ENCODE measurements at regions of chr21 and their contacts with region 1.

Region 1: GRCh38 chr21:28745131-28746016 is 247.3 kb downstream of the LTN1 start:
- DNase-seq: peak; percentile 61 to 70 (median 65)
- H3K4me3 ChIP-seq: peak overlapping the region; percentile 31 to 51
- H3K4me3 Mint-ChIP-seq: no peak overlapping the region
- H3K27ac ChIP-seq: no peak overlapping the region
- H3K27ac Mint-ChIP-seq: no peak overlapping the region
- H3K4me1 ChIP-seq: peaks cover 5% of the 10 kb centered on the region
- H3K4me1 Mint-ChIP-seq: no peaks in the 10 kb centered on the region
- H3K27me3 ChIP-seq: no peaks in the 10 kb centered on the region
- H3K27me3 Mint-ChIP-seq: no peaks in the 10 kb centered on the region

Region 2: GRCh38 chr21:26850108-26850643 is 1895.2 kb before region 1 on chr21:
- CTCF ChIA-PET with region 1: interaction called, 15 read pairs
- POLR2A ChIA-PET with region 1: no interaction called
- intact Hi-C with region 1: loop called (anchors 1 kb)
- DNase-seq: no peak
- H3K4me3 ChIP-seq: no peak overlapping the region
- H3K4me3 Mint-ChIP-seq: no peak overlapping the region
- H3K27ac ChIP-seq: no peak overlapping the region
- H3K27ac Mint-ChIP-seq: no peak overlapping the region
- H3K4me1 ChIP-seq: peaks cover 17% of the 10 kb centered on the region
- H3K4me1 Mint-ChIP-seq: peaks cover 14 to 22% (median 19%) of the 10 kb centered on the region in 4 donors
- H3K27me3 ChIP-seq: peaks cover 5% of the 10 kb centered on the region
- H3K27me3 Mint-ChIP-seq: peaks cover 29 to 38% of the 10 kb centered on the region in 2 donors

Region 3: DNA sequence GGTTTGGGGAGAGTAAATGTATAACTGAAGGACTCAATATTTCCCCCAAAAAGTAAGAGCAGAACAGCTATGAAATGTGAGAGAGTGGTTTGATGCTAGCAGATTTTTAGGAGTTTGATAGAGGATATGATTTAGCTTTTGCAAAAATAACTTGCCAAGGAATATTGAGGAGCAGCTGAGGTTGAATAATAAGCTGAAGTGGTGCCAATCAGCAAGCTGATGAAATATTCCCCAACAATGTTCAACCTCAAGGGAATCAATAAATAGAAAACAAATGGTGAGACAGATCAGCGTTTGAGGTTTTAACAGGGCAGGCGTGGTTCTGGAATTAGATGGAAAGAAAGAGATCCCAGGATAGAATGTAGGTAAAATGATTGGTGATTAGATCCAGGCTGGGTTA is 1365.1 kb before region 1 on chr21:
- CTCF ChIA-PET with region 1: no interaction called
- POLR2A ChIA-PET with region 1: no interaction called
- intact Hi-C with region 1: no loop called
- DNase-seq: no peak
- H3K4me3 ChIP-seq: no peak overlapping the region
- H3K4me3 Mint-ChIP-seq: no peak overlapping the region
- H3K27ac ChIP-seq: no peak overlapping the region
- H3K27ac Mint-ChIP-seq: no peak overlapping the region
- H3K4me1 ChIP-seq: no peaks in the 10 kb centered on the region
- H3K4me1 Mint-ChIP-seq: no peaks in the 10 kb centered on the region
- H3K27me3 ChIP-seq: no peaks in the 10 kb centered on the region
- H3K27me3 Mint-ChIP-seq: no peaks in the 10 kb centered on the region

Region 4: GRCh38 chr21:28142697-28143096 is 602.7 kb before region 1 on chr21:
- CTCF ChIA-PET with region 1: no interaction called
- POLR2A ChIA-PET with region 1: no interaction called
- intact Hi-C with region 1: no loop called
- DNase-seq: no peak
- H3K4me3 ChIP-seq: no peak overlapping the region
- H3K4me3 Mint-ChIP-seq: no peak overlapping the region
- H3K27ac ChIP-seq: no peak overlapping the region
- H3K27ac Mint-ChIP-seq: peak overlapping the region in 1 of 7 donors; percentile 38
- H3K4me1 ChIP-seq: no peaks in the 10 kb centered on the region
- H3K4me1 Mint-ChIP-seq: no peaks in the 10 kb centered on the region
- H3K27me3 ChIP-seq: no peaks in the 10 kb centered on the region
- H3K27me3 Mint-ChIP-seq: no peaks in the 10 kb centered on the region

Region 5: DNA sequence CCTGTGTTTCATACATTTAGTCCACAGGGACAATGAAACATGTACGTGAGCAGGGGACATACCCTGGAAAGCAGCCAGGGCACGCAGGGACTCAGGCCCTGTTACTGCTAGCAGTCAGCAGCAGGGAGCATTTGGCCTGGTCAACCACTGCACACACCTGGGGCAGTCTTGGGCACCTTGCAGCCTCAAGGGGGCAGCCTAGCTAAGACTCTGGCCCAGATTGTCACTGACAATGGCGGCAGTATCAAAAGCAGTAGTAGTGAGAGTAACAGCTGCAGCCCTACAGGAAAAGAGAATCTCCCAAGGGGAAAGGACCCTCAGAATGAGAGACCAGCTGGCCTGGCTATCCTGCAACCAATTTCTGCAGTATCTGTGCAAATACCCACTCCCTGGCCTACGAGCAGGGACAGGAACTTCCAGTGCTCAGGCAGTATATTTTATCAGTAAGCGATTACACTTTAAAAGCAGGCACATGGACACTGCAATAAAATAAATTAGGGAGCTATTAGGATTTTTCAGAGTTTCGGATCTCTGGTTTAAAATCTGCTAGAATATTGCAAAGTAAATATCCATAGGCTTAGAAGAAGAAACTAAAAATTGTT is 228.3 kb before region 1 on chr21:
- CTCF ChIA-PET with region 1: interaction called, 174 read pairs
- POLR2A ChIA-PET with region 1: interaction called, 8 read pairs
- intact Hi-C with region 1: loop called (anchors 1 kb)
- DNase-seq: peak; percentile 53 to 57 (median 55)
- H3K4me3 ChIP-seq: no peak overlapping the region
- H3K4me3 Mint-ChIP-seq: no peak overlapping the region
- H3K27ac ChIP-seq: no peak overlapping the region
- H3K27ac Mint-ChIP-seq: no peak overlapping the region
- H3K4me1 ChIP-seq: no peaks in the 10 kb centered on the region
- H3K4me1 Mint-ChIP-seq: peaks cover 0 to 6% (median under 1%) of the 10 kb centered on the region in 4 donors
- H3K27me3 ChIP-seq: no peaks in the 10 kb centered on the region
- H3K27me3 Mint-ChIP-seq: peaks cover 0 to 1% of the 10 kb centered on the region in 2 donors

Region 6: GRCh38 chr21:28675331-28676041 is 69.9 kb before region 1 on chr21:
- CTCF ChIA-PET with region 1: no interaction called
- POLR2A ChIA-PET with region 1: no interaction called
- intact Hi-C with region 1: no loop called
- DNase-seq: no peak
- H3K4me3 ChIP-seq: no peak overlapping the region
- H3K4me3 Mint-ChIP-seq: no peak overlapping the region
- H3K27ac ChIP-seq: no peak overlapping the region
- H3K27ac Mint-ChIP-seq: no peak overlapping the region
- H3K4me1 ChIP-seq: no peaks in the 10 kb centered on the region
- H3K4me1 Mint-ChIP-seq: peaks cover 0 to 3% (median 0%) of the 10 kb centered on the region in 4 donors
- H3K27me3 ChIP-seq: no peaks in the 10 kb centered on the region
- H3K27me3 Mint-ChIP-seq: no peaks in the 10 kb centered on the region

Region 7: DNA sequence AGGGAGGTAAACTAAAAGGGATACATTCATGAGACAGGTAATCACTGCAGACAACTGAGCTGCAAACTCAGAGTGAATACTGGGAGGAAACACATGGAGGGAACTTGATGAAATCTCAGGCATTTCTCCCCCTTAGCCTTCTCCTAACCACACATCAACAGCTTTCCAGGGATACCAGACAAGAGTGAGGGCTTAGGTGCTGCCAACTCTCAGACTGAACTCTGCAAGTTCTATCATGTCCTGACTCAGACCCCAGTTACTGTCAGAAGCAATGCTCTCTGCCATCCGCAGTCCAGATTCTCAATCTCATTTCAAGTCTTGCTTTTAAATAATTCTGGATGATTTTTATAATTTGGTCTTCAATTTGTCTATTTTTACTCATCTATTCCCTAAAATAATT is 20.0 kb before region 1 on chr21:
- CTCF ChIA-PET with region 1: interaction called, 21 read pairs
- POLR2A ChIA-PET with region 1: no interaction called
- intact Hi-C with region 1: no loop called
- DNase-seq: no peak
- H3K4me3 ChIP-seq: no peak overlapping the region
- H3K4me3 Mint-ChIP-seq: no peak overlapping the region
- H3K27ac ChIP-seq: no peak overlapping the region
- H3K27ac Mint-ChIP-seq: peak overlapping the region in 1 of 7 donors; percentile 9
- H3K4me1 ChIP-seq: no peaks in the 10 kb centered on the region
- H3K4me1 Mint-ChIP-seq: no peaks in the 10 kb centered on the region
- H3K27me3 ChIP-seq: no peaks in the 10 kb centered on the region
- H3K27me3 Mint-ChIP-seq: no peaks in the 10 kb centered on the region

Region 8: DNA sequence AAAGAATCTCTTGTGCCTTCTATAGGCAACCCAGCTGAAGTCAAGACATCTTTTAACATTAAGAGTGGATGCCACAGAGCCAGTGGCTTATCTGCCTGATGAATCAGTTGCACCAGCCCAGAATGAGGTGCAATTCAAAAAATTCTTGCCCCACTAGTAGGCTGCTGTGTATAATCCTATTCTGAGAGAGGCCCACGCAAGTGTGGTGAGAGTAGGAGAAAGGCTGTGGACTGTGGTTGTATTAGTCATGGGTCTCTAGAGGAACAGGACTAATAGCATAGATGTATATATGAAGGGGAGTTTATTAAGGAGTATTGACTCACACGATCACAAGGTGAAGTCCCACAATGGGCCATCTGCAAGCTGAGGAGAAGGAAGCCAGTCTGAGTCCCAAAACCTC is 30.9 kb after region 1 on chr21:
- CTCF ChIA-PET with region 1: interaction called, 13 read pairs
- POLR2A ChIA-PET with region 1: no interaction called
- intact Hi-C with region 1: no loop called
- DNase-seq: no peak
- H3K4me3 ChIP-seq: no peak overlapping the region
- H3K4me3 Mint-ChIP-seq: no peak overlapping the region
- H3K27ac ChIP-seq: no peak overlapping the region
- H3K27ac Mint-ChIP-seq: no peak overlapping the region
- H3K4me1 ChIP-seq: no peaks in the 10 kb centered on the region
- H3K4me1 Mint-ChIP-seq: peaks cover 0 to 5% (median 2%) of the 10 kb centered on the region in 4 donors
- H3K27me3 ChIP-seq: no peaks in the 10 kb centered on the region
- H3K27me3 Mint-ChIP-seq: no peaks in the 10 kb centered on the region

Region 9: DNA sequence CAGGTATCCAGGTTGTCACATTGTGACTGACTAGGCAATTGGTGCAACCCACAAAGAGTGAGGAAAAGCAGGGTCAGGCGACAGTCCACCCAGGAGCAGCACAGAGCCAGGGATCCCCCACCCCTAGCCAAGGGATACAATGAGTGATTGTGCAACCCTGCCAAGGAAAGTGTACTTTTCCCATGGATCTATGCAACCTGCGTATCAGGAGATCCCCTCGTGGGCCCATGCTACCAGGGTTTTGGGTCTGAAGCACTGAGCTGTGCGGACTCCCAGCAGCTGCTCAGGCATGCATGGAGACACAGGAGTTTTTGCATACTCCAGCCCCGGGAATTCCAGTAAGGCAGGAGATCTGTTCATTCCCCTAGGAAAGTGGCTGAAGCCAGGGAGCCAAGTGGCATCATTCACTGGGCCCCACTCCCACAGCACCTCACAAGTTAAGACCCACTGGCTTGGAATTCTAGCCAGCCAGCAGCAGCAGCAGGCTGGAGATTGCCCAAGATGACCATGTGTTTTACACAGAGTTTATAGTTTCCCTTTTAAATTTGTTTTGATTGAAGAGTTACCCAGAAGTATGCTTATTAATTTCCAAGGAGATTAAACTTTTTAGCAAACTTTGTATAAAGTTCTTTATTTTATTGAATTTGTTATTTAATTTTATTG is 111.3 kb after region 1 on chr21:
- CTCF ChIA-PET with region 1: no interaction called
- POLR2A ChIA-PET with region 1: no interaction called
- intact Hi-C with region 1: no loop called
- DNase-seq: no peak
- H3K4me3 ChIP-seq: no peak overlapping the region
- H3K4me3 Mint-ChIP-seq: no peak overlapping the region
- H3K27ac ChIP-seq: no peak overlapping the region
- H3K27ac Mint-ChIP-seq: no peak overlapping the region
- H3K4me1 ChIP-seq: no peaks in the 10 kb centered on the region
- H3K4me1 Mint-ChIP-seq: peaks cover 3 to 7% (median 5%) of the 10 kb centered on the region in 4 donors
- H3K27me3 ChIP-seq: no peaks in the 10 kb centered on the region
- H3K27me3 Mint-ChIP-seq: no peaks in the 10 kb centered on the region

Region 10: DNA sequence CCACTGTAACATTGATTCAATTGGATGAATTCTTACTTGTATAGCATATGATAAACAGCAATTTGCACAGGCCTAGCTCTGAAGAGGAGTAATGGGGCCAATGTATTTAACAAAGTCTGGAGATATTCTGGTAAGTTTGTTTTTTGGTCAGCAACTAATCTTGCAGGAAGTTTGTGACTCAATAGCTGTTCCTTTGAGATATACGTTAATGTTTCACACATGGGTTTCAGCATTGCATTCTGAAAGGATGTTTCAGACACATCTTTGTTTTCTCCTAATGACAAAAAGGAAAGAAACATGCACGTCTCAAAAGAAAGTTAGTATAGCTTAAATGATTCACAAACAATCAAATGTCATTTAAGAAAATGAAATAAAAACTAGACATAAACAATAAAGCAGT is 198.3 kb after region 1 on chr21:
- CTCF ChIA-PET with region 1: interaction called, 62 read pairs
- POLR2A ChIA-PET with region 1: no interaction called
- intact Hi-C with region 1: loop called (anchors 1 kb)
- DNase-seq: no peak
- H3K4me3 ChIP-seq: no peak overlapping the region
- H3K4me3 Mint-ChIP-seq: no peak overlapping the region
- H3K27ac ChIP-seq: no peak overlapping the region
- H3K27ac Mint-ChIP-seq: no peak overlapping the region
- H3K4me1 ChIP-seq: no peaks in the 10 kb centered on the region
- H3K4me1 Mint-ChIP-seq: no peaks in the 10 kb centered on the region
- H3K27me3 ChIP-seq: no peaks in the 10 kb centered on the region
- H3K27me3 Mint-ChIP-seq: no peaks in the 10 kb centered on the region

Measured in CD4-positive, alpha-beta memory T cell (primary cell).